ENCODE measurements at regions of chr20 and their contacts with region 1.

Region 1: GRCh38 chr20:20666359-20666758 is 46.1 kb downstream of the RALGAPA2 start:
- DNase-seq: no peak
- ATAC-seq: no peak
- H3K4me3 ChIP-seq: no peak overlapping the region
- H3K4me3 Mint-ChIP-seq: no peak overlapping the region
- H3K27ac ChIP-seq: no peak overlapping the region
- H3K27ac Mint-ChIP-seq: no peak overlapping the region
- H3K4me1 ChIP-seq: peaks cover 3 to 7% of the 10 kb centered on the region in 2 experiments
- H3K4me1 Mint-ChIP-seq: peaks cover 36 to 61% (median 36%) of the 10 kb centered on the region in 3 donors
- H3K27me3 ChIP-seq: no peaks in the 10 kb centered on the region
- H3K27me3 Mint-ChIP-seq: no peaks in the 10 kb centered on the region

Region 2: DNA sequence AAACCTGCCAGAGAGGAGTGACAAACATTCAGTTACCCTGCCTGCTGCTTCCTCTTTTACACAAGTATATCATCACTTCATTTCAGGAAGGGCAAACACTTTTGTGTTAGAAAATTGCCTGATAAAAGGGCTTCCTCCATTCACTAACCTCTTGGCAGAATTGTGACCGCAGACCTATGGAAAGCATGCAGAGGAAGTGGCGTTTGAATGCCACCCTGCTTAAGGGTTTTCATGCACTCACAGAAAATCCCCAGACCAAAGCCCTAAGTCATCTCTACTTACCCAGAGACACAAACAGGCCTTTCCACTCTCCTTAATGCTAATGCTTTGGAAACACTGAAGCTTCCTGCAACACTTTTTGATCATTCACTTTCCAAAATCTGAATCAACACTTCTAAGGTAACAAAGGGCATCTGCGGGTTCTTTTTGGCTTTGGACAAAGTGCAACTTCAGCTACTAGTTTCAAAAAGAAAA is 68.2 kb after region 1 on chr20:
- CTCF ChIA-PET with region 1: no interaction called
- POLR2A ChIA-PET with region 1: no interaction called
- DNase-seq: peak in 6 of 35 experiments; percentile 3 to 29 (median 13)
- ATAC-seq: peak; percentile 23 to 86 (median 56)
- H3K4me3 ChIP-seq: no peak overlapping the region
- H3K4me3 Mint-ChIP-seq: peak overlapping the region in 1 of 3 donors; percentile 16
- H3K27ac ChIP-seq: no peak overlapping the region
- H3K27ac Mint-ChIP-seq: peak overlapping the region; percentile 27 to 41
- H3K4me1 ChIP-seq: peaks cover 8 to 10% of the 10 kb centered on the region in 2 experiments
- H3K4me1 Mint-ChIP-seq: peaks cover 13 to 32% (median 16%) of the 10 kb centered on the region in 3 donors
- H3K27me3 ChIP-seq: peaks cover 0 to 3% of the 10 kb centered on the region in 2 experiments
- H3K27me3 Mint-ChIP-seq: peaks cover 4 to 5% of the 10 kb centered on the region in 2 donors

Region 3: GRCh38 chr20:20823476-20823881 is 157.1 kb after region 1 on chr20:
- CTCF ChIA-PET with region 1: interaction called in 1 of 2 experiments, 10 read pairs
- POLR2A ChIA-PET with region 1: no interaction called
- DNase-seq: no peak
- ATAC-seq: no peak
- H3K4me3 ChIP-seq: no peak overlapping the region
- H3K4me3 Mint-ChIP-seq: no peak overlapping the region
- H3K27ac ChIP-seq: no peak overlapping the region
- H3K27ac Mint-ChIP-seq: no peak overlapping the region
- H3K4me1 ChIP-seq: no peaks in the 10 kb centered on the region
- H3K4me1 Mint-ChIP-seq: peaks cover 2 to 5% (median 2%) of the 10 kb centered on the region in 3 donors
- H3K27me3 ChIP-seq: peaks cover 0 to 28% of the 10 kb centered on the region in 2 experiments
- H3K27me3 Mint-ChIP-seq: peaks cover 25 to 32% of the 10 kb centered on the region in 2 donors